ENCODE measurements at regions of chr6 and their contacts with region 1.

Region 1: GRCh38 chr6:37791156-37791919 is 28.2 kb upstream of the ZFAND3 start:
- DNase-seq: peak; percentile 56 to 86 (median 74)
- ATAC-seq: peak; percentile 100
- H3K4me3 ChIP-seq: no peak overlapping the region
- H3K4me3 Mint-ChIP-seq: no peak overlapping the region
- H3K27ac ChIP-seq: no peak overlapping the region
- H3K27ac Mint-ChIP-seq: no peak overlapping the region
- H3K4me1 ChIP-seq: peaks cover 8% of the 10 kb centered on the region
- H3K4me1 Mint-ChIP-seq: no peaks in the 10 kb centered on the region
- H3K27me3 ChIP-seq: no peaks in the 10 kb centered on the region
- H3K27me3 Mint-ChIP-seq: no peaks in the 10 kb centered on the region
- CTCF ChIP-seq: peak; percentile 91

Region 2: GRCh38 chr6:37860226-37860839 is 69.0 kb after region 1 on chr6:
- CTCF ChIA-PET with region 1: interaction called, 3 read pairs
- POLR2A ChIA-PET with region 1: no interaction called
- intact Hi-C with region 1: loop called (anchors 2 kb)
- DNase-seq: peak in 5 of 14 experiments; percentile 3 to 66 (median 51)
- ATAC-seq: no peak
- H3K4me3 ChIP-seq: no peak overlapping the region
- H3K4me3 Mint-ChIP-seq: no peak overlapping the region
- H3K27ac ChIP-seq: no peak overlapping the region
- H3K27ac Mint-ChIP-seq: no peak overlapping the region
- H3K4me1 ChIP-seq: peaks cover 14% of the 10 kb centered on the region
- H3K4me1 Mint-ChIP-seq: peaks cover 82% of the 10 kb centered on the region
- H3K27me3 ChIP-seq: no peaks in the 10 kb centered on the region
- H3K27me3 Mint-ChIP-seq: no peaks in the 10 kb centered on the region
- CTCF ChIP-seq: peak; percentile 71

Region 3: DNA sequence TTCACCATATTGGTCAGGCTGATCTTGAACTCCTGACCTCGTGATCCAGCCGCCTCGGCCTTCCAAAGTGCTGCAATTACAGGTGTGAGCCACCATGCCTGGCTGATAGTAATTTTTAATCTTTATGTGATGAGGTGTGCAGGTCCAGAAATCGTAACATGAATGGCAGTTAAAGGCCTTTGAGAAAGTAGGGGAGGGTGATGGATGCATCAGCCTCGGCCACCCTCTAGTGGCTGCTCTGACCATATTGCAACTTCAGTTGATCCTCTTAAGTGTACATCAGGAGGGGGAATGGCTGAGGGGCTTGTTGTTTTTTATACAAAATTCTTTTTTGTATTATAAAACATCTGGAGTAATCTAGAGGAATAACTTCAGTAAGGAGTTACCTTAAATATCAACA is 221.2 kb after region 1 on chr6:
- CTCF ChIA-PET with region 1: no interaction called
- POLR2A ChIA-PET with region 1: no interaction called
- intact Hi-C with region 1: loop called (anchors 1 to 5 kb)
- DNase-seq: peak in 4 of 14 experiments; percentile 8 to 42 (median 24)
- ATAC-seq: no peak
- H3K4me3 ChIP-seq: no peak overlapping the region
- H3K4me3 Mint-ChIP-seq: no peak overlapping the region
- H3K27ac ChIP-seq: no peak overlapping the region
- H3K27ac Mint-ChIP-seq: no peak overlapping the region
- H3K4me1 ChIP-seq: no peaks in the 10 kb centered on the region
- H3K4me1 Mint-ChIP-seq: peaks cover 58% of the 10 kb centered on the region
- H3K27me3 ChIP-seq: no peaks in the 10 kb centered on the region
- H3K27me3 Mint-ChIP-seq: no peaks in the 10 kb centered on the region
- CTCF ChIP-seq: peak; percentile 24

Region 4: DNA sequence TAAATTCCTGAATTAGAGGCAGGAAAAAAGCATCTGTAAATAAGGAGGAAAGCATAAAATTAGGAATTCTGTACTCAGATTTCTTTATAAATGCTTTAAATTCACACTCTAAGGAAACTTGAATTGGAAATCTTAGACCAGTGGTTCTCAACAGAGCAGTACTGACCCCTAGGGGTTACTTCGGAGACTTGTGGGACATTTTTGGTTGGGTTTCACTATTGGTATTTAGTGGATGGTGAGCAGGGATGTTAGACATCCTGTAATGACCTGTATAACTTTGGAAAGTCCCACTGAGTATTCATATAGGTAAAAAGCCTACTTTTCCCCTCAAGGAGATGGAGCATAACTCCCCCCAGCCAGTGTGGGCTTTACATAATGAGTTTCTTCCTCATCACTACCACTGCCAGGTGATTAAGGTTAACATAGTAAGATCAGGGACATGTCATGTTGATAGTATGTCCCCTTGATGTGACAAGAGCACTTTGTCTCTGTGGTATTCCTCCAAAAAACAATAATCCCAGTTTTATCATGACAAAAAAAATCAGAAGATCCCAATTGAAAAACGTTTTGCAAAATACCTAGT is 880.6 kb after region 1 on chr6:
- CTCF ChIA-PET with region 1: no interaction called
- POLR2A ChIA-PET with region 1: no interaction called
- intact Hi-C with region 1: loop called in 1 of 2 experiments (anchors 5 kb)
- DNase-seq: peak in 5 of 14 experiments; percentile 18 to 73 (median 61)
- ATAC-seq: peak; percentile 59
- H3K4me3 ChIP-seq: no peak overlapping the region
- H3K4me3 Mint-ChIP-seq: no peak overlapping the region
- H3K27ac ChIP-seq: no peak overlapping the region
- H3K27ac Mint-ChIP-seq: no peak overlapping the region
- H3K4me1 ChIP-seq: peaks cover 7% of the 10 kb centered on the region
- H3K4me1 Mint-ChIP-seq: peaks cover 25% of the 10 kb centered on the region
- H3K27me3 ChIP-seq: no peaks in the 10 kb centered on the region
- H3K27me3 Mint-ChIP-seq: no peaks in the 10 kb centered on the region
- CTCF ChIP-seq: peak; percentile 77

Measured in CD4-positive, alpha-beta T cell (primary cell).